SK-N-SH (cell line): ENCODE measurements at regions of chr19 and their contacts with region 1.

Region 1: GRCh38 chr19:2315818-2316353 is 7.9 kb upstream of the LINGO3 start:
- DNase-seq: peak; percentile 95
- H3K4me3 ChIP-seq: no peak overlapping the region; a peak in 1 of 4 replicates
- H3K27ac ChIP-seq: no peak overlapping the region; a peak in 1 of 4 replicates
- H3K4me1 ChIP-seq: peaks cover 0 to 2% of the 10 kb centered on the region in 2 experiments; a peak in 1 of 4 replicates
- H3K27me3 ChIP-seq: no peaks in the 10 kb centered on the region
- CTCF ChIP-seq: peak; percentile 80
- EP300 ChIP-seq: no peak
- RAD21 ChIP-seq: peak; percentile 98

Region 2: DNA sequence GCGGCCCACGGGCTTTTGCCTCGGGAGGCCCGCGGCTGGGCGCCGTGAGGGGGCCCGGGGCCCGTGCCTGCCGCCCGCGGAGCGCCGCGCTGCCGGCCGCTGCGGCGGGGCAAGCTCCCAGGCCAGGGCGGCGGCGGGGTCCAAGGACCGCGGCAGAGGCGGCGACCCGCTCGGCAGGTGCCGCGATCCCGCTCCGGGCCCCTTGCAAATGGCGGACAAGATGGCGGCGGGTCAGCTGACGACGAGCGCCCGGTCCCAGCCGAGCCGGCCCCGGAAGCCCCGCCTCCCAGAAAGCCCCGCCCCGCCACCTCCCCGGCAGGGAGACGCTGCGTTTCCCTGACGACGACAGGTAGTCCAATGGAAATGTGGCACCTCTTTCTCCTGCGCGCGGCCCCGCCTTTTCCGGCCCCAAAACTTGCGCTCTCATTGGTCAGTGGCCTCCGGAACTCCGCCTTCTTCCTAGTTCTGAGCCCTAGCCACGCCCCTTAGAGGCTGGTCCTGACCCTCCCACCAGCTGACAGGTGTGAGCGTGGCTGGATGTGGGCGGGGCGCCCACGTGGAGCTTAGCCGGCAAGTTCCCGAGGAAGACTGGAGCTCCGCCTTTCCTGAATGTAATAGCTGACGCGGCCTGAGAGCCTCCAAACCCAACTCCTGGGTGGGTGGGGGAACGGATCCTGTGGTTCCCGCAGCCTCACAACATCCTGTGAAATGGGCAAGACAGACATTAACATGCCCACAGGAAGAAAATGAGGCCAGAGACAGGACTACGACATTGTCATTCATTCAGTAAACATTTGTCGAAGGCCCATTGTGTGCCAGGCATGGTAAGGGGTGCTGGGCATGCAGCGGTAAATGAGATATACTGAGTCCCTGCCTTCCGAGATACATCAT is 164.3 kb before region 1 on chr19 and contains the start of gene AP3D1:
- CTCF ChIA-PET with region 1: interaction called, 54 read pairs
- POLR2A ChIA-PET with region 1: no interaction called
- DNase-seq: peak; percentile 100
- H3K4me3 ChIP-seq: peak within 1 kb of the TSS; percentile 80 to 81
- H3K27ac ChIP-seq: peak within 1 kb of the TSS; percentile 60 to 89
- H3K4me1 ChIP-seq: peaks cover 5 to 15% of the 10 kb centered on the region in 2 experiments; a peak in 2 of 4 replicates
- H3K27me3 ChIP-seq: no peaks in the 10 kb centered on the region
- CTCF ChIP-seq: no peak
- EP300 ChIP-seq: no peak
- RAD21 ChIP-seq: no peak
- polyA plus RNA-seq, gene AP3D1: 79.7 and 127 TPM in 2 replicates

Region 3: DNA sequence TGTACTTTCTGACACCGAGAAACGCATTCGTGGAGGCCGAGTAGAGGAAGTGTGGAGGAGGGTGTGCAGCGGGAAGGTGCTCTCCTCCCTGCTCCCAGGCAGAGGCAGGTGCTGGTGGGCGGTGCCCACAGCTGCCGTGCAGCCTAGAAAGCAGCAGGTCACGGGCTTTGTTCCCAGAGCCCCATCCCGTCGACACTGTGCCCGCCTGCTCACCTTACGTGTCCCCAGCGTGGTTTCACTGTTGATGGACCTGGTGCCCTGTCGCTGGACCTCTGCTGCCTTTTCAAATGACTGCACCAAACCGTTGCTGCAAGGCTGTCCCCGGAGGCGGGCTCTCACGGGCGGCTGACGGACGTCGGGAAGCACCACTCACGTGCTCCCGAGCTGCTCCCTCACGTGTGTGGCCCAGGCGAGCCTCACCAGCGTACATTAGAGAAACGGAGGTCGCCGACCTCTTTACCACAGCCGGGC is 100.6 kb before region 1 on chr19:
- CTCF ChIA-PET with region 1: interaction called, 23 read pairs
- POLR2A ChIA-PET with region 1: no interaction called
- DNase-seq: no peak
- H3K4me3 ChIP-seq: no peak overlapping the region
- H3K27ac ChIP-seq: no peak overlapping the region
- H3K4me1 ChIP-seq: peaks cover 0 to 5% of the 10 kb centered on the region in 2 experiments; a peak in 1 of 4 replicates
- H3K27me3 ChIP-seq: no peaks in the 10 kb centered on the region
- CTCF ChIP-seq: no peak
- EP300 ChIP-seq: no peak
- RAD21 ChIP-seq: no peak

Region 4: GRCh38 chr19:2246801-2247361 is 69.0 kb before region 1 on chr19:
- CTCF ChIA-PET with region 1: interaction called, 82 read pairs
- POLR2A ChIA-PET with region 1: interaction called, 5 read pairs
- DNase-seq: peak; percentile 49
- H3K4me3 ChIP-seq: no peak overlapping the region
- H3K27ac ChIP-seq: peak overlapping the region; percentile 45 to 47; a peak in 3 of 4 replicates
- H3K4me1 ChIP-seq: peaks cover 6 to 48% of the 10 kb centered on the region in 2 experiments; a peak in 2 of 4 replicates
- H3K27me3 ChIP-seq: no peaks in the 10 kb centered on the region
- CTCF ChIP-seq: no peak
- EP300 ChIP-seq: no peak
- RAD21 ChIP-seq: no peak

Region 5: GRCh38 chr19:2269244-2269947 is 46.5 kb before region 1 on chr19:
- CTCF ChIA-PET with region 1: interaction called, 284 read pairs
- POLR2A ChIA-PET with region 1: interaction called, 4 read pairs
- DNase-seq: peak; percentile 100
- H3K4me3 ChIP-seq: peak overlapping the region; percentile 91 to 100
- H3K27ac ChIP-seq: peak overlapping the region; percentile 87
- H3K4me1 ChIP-seq: peaks cover 8 to 32% of the 10 kb centered on the region in 2 experiments; a peak in 3 of 4 replicates
- H3K27me3 ChIP-seq: no peaks in the 10 kb centered on the region
- CTCF ChIP-seq: 0 out of 2 replicates have a peak, but pooled peaks have one; percentile 26
- EP300 ChIP-seq: no peak; a peak in 1 of 4 replicates
- RAD21 ChIP-seq: no peak

Region 6: GRCh38 chr19:2302319-2303210 is 13.3 kb before region 1 on chr19:
- CTCF ChIA-PET with region 1: interaction called, 53 read pairs
- POLR2A ChIA-PET with region 1: interaction called, 3 read pairs
- DNase-seq: no peak
- H3K4me3 ChIP-seq: no peak overlapping the region
- H3K27ac ChIP-seq: no peak overlapping the region
- H3K4me1 ChIP-seq: no peaks in the 10 kb centered on the region
- H3K27me3 ChIP-seq: no peaks in the 10 kb centered on the region; the same call in 1 of the 2 replicates
- CTCF ChIP-seq: no peak
- EP300 ChIP-seq: no peak
- RAD21 ChIP-seq: no peak

Region 7: GRCh38 chr19:2391118-2391725 is 75.3 kb after region 1 on chr19:
- CTCF ChIA-PET with region 1: interaction called, 19 read pairs
- POLR2A ChIA-PET with region 1: no interaction called
- DNase-seq: peak; percentile 72
- H3K4me3 ChIP-seq: no peak overlapping the region; a peak in 1 of 4 replicates
- H3K27ac ChIP-seq: no peak overlapping the region
- H3K4me1 ChIP-seq: no peaks in the 10 kb centered on the region
- H3K27me3 ChIP-seq: peaks cover 27% of the 10 kb centered on the region; the same call in 1 of the 2 replicates
- CTCF ChIP-seq: peak; percentile 93
- EP300 ChIP-seq: peak in 1 of 2 experiments; percentile 49; a peak in 1 of 4 replicates
- RAD21 ChIP-seq: peak; percentile 79